CD8-positive, alpha-beta T cell (primary cell): ENCODE measurements at regions of chr9 and their contacts with region 1.

Region 1: GRCh38 chr9:38030658-38031057 is 38.4 kb downstream of the SHB start:
- DNase-seq: no peak
- ATAC-seq: no peak
- H3K4me3 ChIP-seq: no peak overlapping the region
- H3K4me3 Mint-ChIP-seq: no peak overlapping the region
- H3K27ac ChIP-seq: no peak overlapping the region
- H3K27ac Mint-ChIP-seq: no peak overlapping the region
- H3K4me1 ChIP-seq: no peaks in the 10 kb centered on the region
- H3K4me1 Mint-ChIP-seq: peaks cover 7% of the 10 kb centered on the region
- H3K27me3 ChIP-seq: no peaks in the 10 kb centered on the region
- H3K27me3 Mint-ChIP-seq: no peaks in the 10 kb centered on the region
- CTCF ChIP-seq: no peak

Region 2: DNA sequence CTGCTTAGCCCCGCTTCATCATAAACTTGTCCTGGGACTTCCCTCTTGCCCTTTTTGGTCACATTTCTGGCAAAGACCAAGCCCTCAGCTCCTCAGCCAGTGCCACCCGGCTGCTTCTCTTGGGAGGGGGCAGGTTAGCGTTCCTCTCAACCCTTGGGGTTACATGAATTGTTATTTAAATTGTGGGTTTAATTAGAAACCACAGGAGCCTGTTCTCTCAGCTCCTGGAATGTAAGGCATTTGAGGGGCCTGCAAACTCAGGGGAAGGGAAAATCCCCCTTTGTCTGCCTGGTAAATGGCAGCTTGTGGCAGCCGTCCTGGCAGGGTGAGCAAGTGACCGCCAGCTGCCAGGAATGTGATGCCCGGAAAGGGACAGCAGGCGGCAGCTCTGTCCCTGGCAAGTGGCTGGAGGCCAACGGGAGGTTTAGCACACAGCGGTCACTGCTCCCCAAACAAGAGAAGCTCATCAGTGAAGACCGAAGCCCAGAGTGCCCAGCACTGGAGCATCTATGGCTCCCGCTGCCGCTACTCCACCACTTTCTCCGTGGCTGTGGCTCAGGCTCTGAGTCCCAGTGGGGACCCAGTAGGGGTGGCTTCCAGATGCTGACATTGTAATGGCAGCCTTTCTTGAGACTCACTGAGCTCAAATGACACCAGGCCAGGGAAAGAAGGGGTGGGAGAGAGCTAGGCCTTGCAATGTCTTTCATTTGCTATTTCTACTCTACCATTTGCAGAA is 13.3 kb before region 1 on chr9:
- CTCF ChIA-PET with region 1: no interaction called
- POLR2A ChIA-PET with region 1: no interaction called
- intact Hi-C with region 1: loop called in 1 of 2 experiments (anchors 2 kb)
- DNase-seq: no peak
- ATAC-seq: no peak
- H3K4me3 ChIP-seq: no peak overlapping the region
- H3K4me3 Mint-ChIP-seq: no peak overlapping the region
- H3K27ac ChIP-seq: no peak overlapping the region
- H3K27ac Mint-ChIP-seq: no peak overlapping the region
- H3K4me1 ChIP-seq: no peaks in the 10 kb centered on the region
- H3K4me1 Mint-ChIP-seq: no peaks in the 10 kb centered on the region
- H3K27me3 ChIP-seq: no peaks in the 10 kb centered on the region
- H3K27me3 Mint-ChIP-seq: no peaks in the 10 kb centered on the region
- CTCF ChIP-seq: no peak